Spleen (tissue), 13 donors: ENCODE measurements at regions of chr22 and their contacts with region 1.

Region 1: GRCh38 chr22:32926600-32926999 is 125.1 kb downstream of the TIMP3 start:
- DNase-seq: no peak
- H3K4me3 ChIP-seq: no peak overlapping the region
- H3K27ac ChIP-seq: no peak overlapping the region
- H3K4me1 ChIP-seq: no peaks in the 10 kb centered on the region
- H3K27me3 ChIP-seq: no peaks in the 10 kb centered on the region
- CTCF ChIP-seq: peak in 9 of 11 experiments; percentile 15 to 63 (median 47)
- POLR2A ChIP-seq: no peak

Region 2: GRCh38 chr22:32810561-32811004 is 116.0 kb before region 1 on chr22:
- intact Hi-C with region 1: no loop called
- DNase-seq: no peak
- H3K4me3 ChIP-seq: peak overlapping the region in 1 of 8 donors; percentile 22
- H3K27ac ChIP-seq: peak overlapping the region in 1 of 8 donors; percentile 7
- H3K4me1 ChIP-seq: peaks cover 0 to 90% (median 32%) of the 10 kb centered on the region in 6 donors
- H3K27me3 ChIP-seq: peaks cover 0 to 4% (median 0%) of the 10 kb centered on the region in 7 donors
- CTCF ChIP-seq: no peak
- POLR2A ChIP-seq: no peak

Region 3: GRCh38 chr22:32985899-32986765 is 59.5 kb after region 1 on chr22:
- intact Hi-C with region 1: loop called (anchors 10 kb)
- DNase-seq: no peak
- H3K4me3 ChIP-seq: no peak overlapping the region
- H3K27ac ChIP-seq: no peak overlapping the region
- H3K4me1 ChIP-seq: peaks cover 0 to 11% (median 8%) of the 10 kb centered on the region in 6 donors
- H3K27me3 ChIP-seq: no peaks in the 10 kb centered on the region
- CTCF ChIP-seq: peak; percentile 52 to 87 (median 76)
- POLR2A ChIP-seq: no peak